Ovary (tissue), 10 donors: ENCODE measurements at regions of chr10 and their contacts with region 1.

Region 1: GRCh38 chr10:129963641-129964501 is at the start of gene EBF3:
- DNase-seq: peak; percentile 36 to 76 (median 65)
- H3K4me3 ChIP-seq: peak within 1 kb of the TSS; percentile 26
- H3K27ac ChIP-seq: no peak within 1 kb of the TSS
- H3K4me1 ChIP-seq: peaks cover 12% of the 10 kb centered on the region
- H3K27me3 ChIP-seq: peaks cover 15% of the 10 kb centered on the region
- CTCF ChIP-seq: no peak
- EP300 ChIP-seq: no peak
- POLR2A ChIP-seq: no peak
- total RNA-seq, gene EBF3: 0.15 to 2.6 (median 0.78) TPM

Region 2: DNA sequence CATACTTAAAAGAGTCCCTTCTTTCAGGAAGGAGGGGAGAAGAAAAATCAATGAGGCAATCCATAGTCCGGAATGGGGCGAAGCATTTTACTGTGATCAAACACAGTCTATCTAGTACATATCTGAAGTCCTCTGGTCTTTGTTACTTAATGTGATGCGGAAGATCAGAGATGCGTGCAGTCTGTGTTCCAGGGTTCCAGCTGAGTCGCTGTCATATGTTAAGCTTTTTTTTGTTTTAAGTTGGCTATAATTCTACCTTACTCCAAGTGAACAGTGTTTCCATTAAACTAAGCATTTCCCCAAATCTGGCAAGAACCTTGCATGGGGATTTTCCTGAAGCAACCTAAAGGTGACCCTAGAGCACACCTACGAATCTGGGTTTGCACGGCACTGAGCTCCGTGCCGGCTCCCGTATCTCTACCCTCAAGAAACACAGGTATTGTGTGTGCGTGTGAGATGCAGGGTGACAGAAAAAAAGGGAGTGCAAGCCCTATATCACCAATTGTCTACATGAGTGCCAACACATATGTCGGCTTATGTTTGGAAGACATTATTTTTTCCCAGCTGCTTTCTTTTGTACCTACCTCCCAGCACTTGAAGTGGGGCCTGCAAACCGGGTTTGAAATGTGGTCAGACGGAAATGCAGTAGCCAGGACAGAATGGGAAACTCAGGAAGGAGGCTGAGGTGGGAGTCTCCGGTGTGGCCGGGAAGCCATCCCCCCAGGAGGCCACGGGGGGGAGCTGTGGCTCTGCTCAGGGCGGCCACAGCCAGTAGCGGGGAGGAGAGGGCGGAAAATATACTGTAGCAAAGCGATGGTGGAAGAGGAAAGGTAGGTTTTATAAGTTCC is 932.7 kb before region 1 on chr10:
- intact Hi-C with region 1: loop called in 2 of 4 experiments (anchors 5 to 10 kb)
- DNase-seq: peak in 3 of 5 donors; percentile 34 to 61 (median 48)
- H3K4me3 ChIP-seq: no peak overlapping the region
- H3K27ac ChIP-seq: no peak overlapping the region
- H3K4me1 ChIP-seq: no peaks in the 10 kb centered on the region
- H3K27me3 ChIP-seq: no peaks in the 10 kb centered on the region
- CTCF ChIP-seq: peak in 2 of 3 donors; percentile 33 to 39
- EP300 ChIP-seq: no peak
- POLR2A ChIP-seq: no peak

Region 3: GRCh38 chr10:129219364-129219763 is 744.5 kb before region 1 on chr10:
- intact Hi-C with region 1: no loop called
- DNase-seq: no peak
- H3K4me3 ChIP-seq: no peak overlapping the region
- H3K27ac ChIP-seq: no peak overlapping the region
- H3K4me1 ChIP-seq: no peaks in the 10 kb centered on the region
- H3K27me3 ChIP-seq: no peaks in the 10 kb centered on the region
- CTCF ChIP-seq: no peak
- EP300 ChIP-seq: no peak
- POLR2A ChIP-seq: no peak

Region 4: GRCh38 chr10:129466703-129467358 is 497.0 kb before region 1 on chr10 and contains the start of gene MGMT:
- intact Hi-C with region 1: loop called in 1 of 4 experiments (anchors 10 kb)
- DNase-seq: peak; percentile 94 to 98 (median 97)
- H3K4me3 ChIP-seq: peak within 1 kb of the TSS; percentile 78
- H3K27ac ChIP-seq: peak within 1 kb of the TSS; percentile 83 to 86
- H3K4me1 ChIP-seq: peaks cover 2% of the 10 kb centered on the region
- H3K27me3 ChIP-seq: no peaks in the 10 kb centered on the region
- CTCF ChIP-seq: no peak
- EP300 ChIP-seq: no peak
- POLR2A ChIP-seq: peak; percentile 51
- total RNA-seq, gene MGMT: 14.7 to 53.3 (median 26.5) TPM

Region 5: GRCh38 chr10:129579176-129579750 is 384.6 kb before region 1 on chr10:
- intact Hi-C with region 1: no loop called
- DNase-seq: no peak
- H3K4me3 ChIP-seq: no peak overlapping the region
- H3K27ac ChIP-seq: no peak overlapping the region
- H3K4me1 ChIP-seq: no peaks in the 10 kb centered on the region
- H3K27me3 ChIP-seq: no peaks in the 10 kb centered on the region
- CTCF ChIP-seq: no peak
- EP300 ChIP-seq: no peak
- POLR2A ChIP-seq: no peak